PC-3 (cell line): ENCODE measurements at regions of chr1 and their contacts with region 1.

Region 1: DNA sequence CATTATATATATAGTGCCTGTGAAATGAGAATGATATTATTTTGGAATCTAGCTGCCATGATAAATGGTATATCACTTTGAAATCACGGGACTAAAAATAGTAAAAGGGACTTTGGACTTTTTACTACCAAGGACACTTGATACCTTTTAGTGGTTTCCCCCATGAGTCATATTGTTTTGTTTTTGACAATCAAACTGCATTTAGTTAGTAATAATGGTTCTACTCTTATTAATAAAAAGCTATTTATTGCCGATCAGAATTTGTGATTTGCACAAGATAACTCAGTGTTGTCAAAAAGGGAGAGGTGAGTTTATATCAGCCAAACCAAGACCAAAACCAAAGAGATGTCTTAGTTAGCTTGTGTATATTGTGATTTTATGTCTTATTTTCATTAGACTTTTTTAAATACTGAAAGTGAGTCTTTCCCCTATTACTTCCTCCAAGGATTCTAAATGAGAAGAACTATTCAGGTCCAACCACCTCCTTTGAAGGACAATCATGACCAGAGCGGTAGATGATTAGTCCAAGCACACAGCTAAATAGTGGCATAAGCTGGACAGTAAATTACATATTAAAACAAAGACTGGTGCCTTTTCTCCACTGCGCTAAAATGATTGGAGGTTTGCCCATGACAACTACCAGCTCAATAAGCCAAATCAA is 281.7 kb upstream of the ESRRG start:
- DNase-seq: peak; percentile 79
- ATAC-seq: peak; percentile 70
- H3K4me3 ChIP-seq: no peak overlapping the region
- H3K27ac ChIP-seq: peak overlapping the region; percentile 16
- H3K4me1 ChIP-seq: peaks cover 23% of the 10 kb centered on the region
- H3K27me3 ChIP-seq: no peaks in the 10 kb centered on the region
- CTCF ChIP-seq: no peak

Region 2: GRCh38 chr1:216902669-216903381 is 102.1 kb before region 1 on chr1:
- CTCF ChIA-PET with region 1: no interaction called
- POLR2A ChIA-PET with region 1: no interaction called
- intact Hi-C with region 1: loop called (anchors 5 kb)
- DNase-seq: peak; percentile 84
- ATAC-seq: peak; percentile 82
- H3K4me3 ChIP-seq: no peak overlapping the region
- H3K27ac ChIP-seq: peak overlapping the region; percentile 41
- H3K4me1 ChIP-seq: peaks cover 19% of the 10 kb centered on the region
- H3K27me3 ChIP-seq: no peaks in the 10 kb centered on the region
- CTCF ChIP-seq: no peak

Region 3: DNA sequence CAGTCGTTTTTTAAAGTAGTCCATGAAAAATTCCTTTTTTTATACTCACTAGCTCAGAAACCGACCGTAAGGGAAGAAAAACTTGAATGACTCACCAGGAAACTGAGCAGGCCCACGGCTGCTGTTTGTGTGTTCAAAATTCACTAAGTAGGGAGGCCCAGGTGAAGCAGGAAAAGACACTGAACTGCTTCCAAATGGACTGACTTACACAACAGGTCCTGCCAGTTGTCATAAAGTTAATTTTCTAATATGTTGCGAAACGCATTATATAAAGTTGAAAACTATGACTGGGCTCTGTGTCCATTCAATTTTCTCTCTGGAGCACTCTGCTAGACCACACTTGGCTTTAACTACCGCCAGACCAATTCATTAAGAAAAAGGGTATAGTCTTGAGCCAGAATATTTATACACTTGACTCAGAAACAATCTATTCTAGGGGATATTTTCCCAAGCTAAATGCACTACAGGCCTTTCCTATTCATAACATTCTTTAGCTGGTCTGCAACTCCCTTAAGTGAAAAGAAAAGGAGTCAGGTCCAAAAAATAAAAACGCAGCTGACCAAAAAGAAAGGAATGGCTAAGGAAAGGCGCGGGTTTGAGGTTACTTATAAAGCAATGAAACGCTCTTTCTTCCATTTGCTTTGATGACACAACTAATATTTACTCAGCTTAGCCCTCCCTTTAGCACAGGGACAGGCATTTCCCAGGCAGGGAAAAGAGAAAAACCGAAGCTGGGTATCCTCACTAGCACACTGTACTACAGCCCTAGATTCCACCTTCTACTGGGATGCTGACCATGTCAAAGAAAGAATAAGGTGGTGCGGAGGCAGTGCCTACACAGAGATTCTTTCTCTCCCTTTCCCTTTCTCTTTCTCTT is 24.6 kb after region 1 on chr1:
- CTCF ChIA-PET with region 1: no interaction called
- POLR2A ChIA-PET with region 1: interaction called, 6 read pairs
- intact Hi-C with region 1: loop called (anchors 1 kb)
- DNase-seq: peak; percentile 99
- ATAC-seq: peak; percentile 94
- H3K4me3 ChIP-seq: peak overlapping the region; percentile 55
- H3K27ac ChIP-seq: peak overlapping the region; percentile 91
- H3K4me1 ChIP-seq: peaks cover 46% of the 10 kb centered on the region
- H3K27me3 ChIP-seq: no peaks in the 10 kb centered on the region
- CTCF ChIP-seq: no peak

Region 4: DNA sequence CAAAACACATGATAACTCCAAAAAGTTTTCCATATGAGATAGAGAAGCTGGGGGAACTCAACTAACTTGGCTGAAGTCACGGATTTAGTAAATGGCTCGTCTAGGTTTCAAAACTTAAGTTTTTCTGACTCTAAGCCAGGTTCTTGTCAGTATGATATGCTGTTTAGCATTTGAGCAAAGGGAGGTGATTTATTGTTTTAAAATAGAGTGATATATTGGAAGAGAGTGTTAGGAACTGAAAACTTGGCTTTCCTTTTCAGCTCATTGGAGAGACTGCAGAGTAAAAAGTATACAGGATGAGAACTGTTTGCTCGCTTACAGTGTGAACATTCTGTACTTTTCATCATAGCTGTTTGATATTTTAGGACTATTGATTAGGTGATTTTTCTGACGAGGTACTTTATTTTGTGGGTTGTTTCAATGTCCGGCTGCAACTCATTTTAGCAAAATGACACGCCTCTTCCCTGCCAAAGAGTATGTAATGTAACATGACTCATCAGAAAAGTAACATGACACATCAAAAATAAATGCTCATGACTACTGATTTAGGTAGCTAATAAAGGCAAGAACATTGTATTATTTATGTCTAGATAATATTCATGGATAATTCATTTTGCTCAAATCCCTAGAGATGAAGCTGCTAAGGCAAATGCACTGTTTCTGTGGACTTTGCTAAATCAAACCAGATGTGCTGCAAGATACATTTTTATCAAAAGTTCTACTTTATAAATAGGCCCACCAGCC is 270.9 kb after region 1 on chr1:
- CTCF ChIA-PET with region 1: no interaction called
- POLR2A ChIA-PET with region 1: no interaction called
- intact Hi-C with region 1: loop called (anchors 2 kb)
- DNase-seq: peak; percentile 96
- ATAC-seq: peak; percentile 67
- H3K4me3 ChIP-seq: peak overlapping the region; percentile 50
- H3K27ac ChIP-seq: peak overlapping the region; percentile 92
- H3K4me1 ChIP-seq: peaks cover 48% of the 10 kb centered on the region
- H3K27me3 ChIP-seq: no peaks in the 10 kb centered on the region
- CTCF ChIP-seq: no peak